ENCODE measurements at regions of chr5 and their contacts with region 1.

Region 1: DNA sequence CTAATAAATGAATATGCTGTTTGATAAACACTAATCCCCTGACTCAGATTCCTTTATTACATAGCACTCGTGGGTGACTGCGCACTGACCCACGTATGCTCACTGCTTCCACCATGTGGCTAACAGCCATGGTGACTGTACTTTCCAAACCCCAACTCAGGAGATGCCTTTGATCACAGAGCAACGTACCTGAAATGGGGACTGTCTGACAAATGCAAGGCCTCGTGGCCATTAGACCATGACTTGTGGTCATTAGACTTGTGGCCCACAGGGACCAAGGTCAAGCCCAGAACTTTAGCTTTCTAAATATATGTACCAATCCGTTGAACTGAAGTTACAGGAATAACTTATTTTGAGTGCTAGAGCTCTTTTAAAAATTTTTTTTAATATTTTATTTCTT is 46.6 kb downstream of the CYFIP2 start:
- DNase-seq: peak in 8 of 9 donors; percentile 51 to 71 (median 65)
- ATAC-seq: peak; percentile 96
- H3K4me3 ChIP-seq: no peak overlapping the region
- H3K4me3 Mint-ChIP-seq: peak overlapping the region in 2 of 10 donors; percentile 35
- H3K27ac ChIP-seq: peak overlapping the region; percentile 39
- H3K27ac Mint-ChIP-seq: peak overlapping the region; percentile 50 to 94 (median 86)
- H3K4me1 ChIP-seq: peaks cover 22 to 36% of the 10 kb centered on the region in 2 donors
- H3K4me1 Mint-ChIP-seq: peaks cover 18 to 59% (median 42%) of the 10 kb centered on the region in 7 donors
- H3K27me3 ChIP-seq: no peaks in the 10 kb centered on the region
- H3K27me3 Mint-ChIP-seq: no peaks in the 10 kb centered on the region

Region 2: GRCh38 chr5:156893517-156893916 is 419.0 kb before region 1 on chr5:
- CTCF ChIA-PET with region 1: no interaction called
- POLR2A ChIA-PET with region 1: no interaction called
- intact Hi-C with region 1: loop called in 1 of 2 experiments (anchors 5 kb)
- DNase-seq: no peak
- ATAC-seq: no peak
- H3K4me3 ChIP-seq: no peak overlapping the region
- H3K4me3 Mint-ChIP-seq: peak overlapping the region in 5 of 10 donors; percentile 12 to 58 (median 19)
- H3K27ac ChIP-seq: no peak overlapping the region
- H3K27ac Mint-ChIP-seq: peak overlapping the region in 6 of 9 donors; percentile 2 to 93 (median 58)
- H3K4me1 ChIP-seq: peaks cover 0 to 15% of the 10 kb centered on the region in 2 donors
- H3K4me1 Mint-ChIP-seq: peaks cover 21 to 52% (median 32%) of the 10 kb centered on the region in 7 donors
- H3K27me3 ChIP-seq: no peaks in the 10 kb centered on the region
- H3K27me3 Mint-ChIP-seq: no peaks in the 10 kb centered on the region

Region 3: GRCh38 chr5:156913719-156914370 is 398.6 kb before region 1 on chr5:
- CTCF ChIA-PET with region 1: no interaction called
- POLR2A ChIA-PET with region 1: no interaction called
- intact Hi-C with region 1: loop called in 1 of 2 experiments (anchors 10 kb)
- DNase-seq: peak in 6 of 9 donors; percentile 32 to 60 (median 54)
- ATAC-seq: peak; percentile 85
- H3K4me3 ChIP-seq: peak overlapping the region; percentile 24
- H3K4me3 Mint-ChIP-seq: peak overlapping the region; percentile 71 to 93 (median 82)
- H3K27ac ChIP-seq: peak overlapping the region; percentile 65
- H3K27ac Mint-ChIP-seq: peak overlapping the region; percentile 91 to 100 (median 97)
- H3K4me1 ChIP-seq: peaks cover 24 to 28% of the 10 kb centered on the region in 2 donors
- H3K4me1 Mint-ChIP-seq: peaks cover 35 to 81% (median 68%) of the 10 kb centered on the region in 7 donors
- H3K27me3 ChIP-seq: no peaks in the 10 kb centered on the region
- H3K27me3 Mint-ChIP-seq: no peaks in the 10 kb centered on the region

Region 4: GRCh38 chr5:157225469-157226422 is 86.7 kb before region 1 on chr5:
- CTCF ChIA-PET with region 1: interaction called, 4 read pairs
- POLR2A ChIA-PET with region 1: no interaction called
- intact Hi-C with region 1: loop called in 1 of 2 experiments (anchors 5 kb)
- DNase-seq: no peak
- ATAC-seq: no peak
- H3K4me3 ChIP-seq: no peak overlapping the region
- H3K4me3 Mint-ChIP-seq: peak overlapping the region in 6 of 10 donors; percentile 12 to 81 (median 50)
- H3K27ac ChIP-seq: peak overlapping the region; percentile 37
- H3K27ac Mint-ChIP-seq: peak overlapping the region; percentile 71 to 96 (median 82)
- H3K4me1 ChIP-seq: peaks cover 44 to 60% of the 10 kb centered on the region in 2 donors
- H3K4me1 Mint-ChIP-seq: peaks cover 34 to 75% (median 59%) of the 10 kb centered on the region in 7 donors
- H3K27me3 ChIP-seq: no peaks in the 10 kb centered on the region
- H3K27me3 Mint-ChIP-seq: no peaks in the 10 kb centered on the region

Region 5: DNA sequence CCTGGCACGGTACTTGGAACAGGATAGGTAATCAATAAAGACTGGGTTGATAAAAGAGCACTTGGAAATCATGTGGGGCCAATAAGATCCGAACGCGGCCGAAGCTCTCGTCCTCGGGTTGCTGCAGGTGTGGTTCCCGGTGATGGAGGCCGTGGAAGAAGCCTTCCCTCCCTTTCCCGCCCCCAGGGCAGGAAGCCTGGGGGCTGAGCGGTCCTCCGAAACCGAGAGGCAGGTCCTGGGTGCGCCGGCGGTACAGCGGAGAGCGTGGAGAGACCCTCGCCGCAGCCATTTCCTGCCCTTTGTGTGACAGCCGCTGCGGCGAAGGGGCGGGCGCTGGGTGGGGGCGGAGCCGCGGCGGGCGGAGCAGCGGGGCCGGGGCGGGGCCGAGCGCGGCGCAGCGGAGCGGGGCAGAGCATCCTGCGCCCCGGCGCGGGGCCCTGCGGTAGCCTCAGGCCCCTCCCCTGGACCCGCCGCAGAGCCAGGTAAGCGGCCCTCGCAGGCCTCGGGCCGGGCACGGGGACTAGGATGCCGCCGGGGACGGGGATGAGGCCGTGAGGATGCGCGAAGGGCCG is 46.7 kb before region 1 on chr5 and contains the start of gene CYFIP2:
- CTCF ChIA-PET with region 1: interaction called, 3 read pairs
- POLR2A ChIA-PET with region 1: interaction called, 59 read pairs
- intact Hi-C with region 1: no loop called
- DNase-seq: peak; percentile 68 to 85 (median 84)
- ATAC-seq: peak; percentile 94
- H3K4me3 ChIP-seq: peak within 1 kb of the TSS; percentile 83
- H3K4me3 Mint-ChIP-seq: peak within 1 kb of the TSS; percentile 95 to 99 (median 97)
- H3K27ac ChIP-seq: peak within 1 kb of the TSS; percentile 84
- H3K27ac Mint-ChIP-seq: peak within 1 kb of the TSS; percentile 95 to 99 (median 98)
- H3K4me1 ChIP-seq: peaks cover 41 to 57% of the 10 kb centered on the region in 2 donors
- H3K4me1 Mint-ChIP-seq: peaks cover 51 to 76% (median 72%) of the 10 kb centered on the region in 7 donors
- H3K27me3 ChIP-seq: no peaks in the 10 kb centered on the region
- H3K27me3 Mint-ChIP-seq: no peaks in the 10 kb centered on the region
- total RNA-seq, gene CYFIP2: 386 to 449 (median 401) TPM

Region 6: DNA sequence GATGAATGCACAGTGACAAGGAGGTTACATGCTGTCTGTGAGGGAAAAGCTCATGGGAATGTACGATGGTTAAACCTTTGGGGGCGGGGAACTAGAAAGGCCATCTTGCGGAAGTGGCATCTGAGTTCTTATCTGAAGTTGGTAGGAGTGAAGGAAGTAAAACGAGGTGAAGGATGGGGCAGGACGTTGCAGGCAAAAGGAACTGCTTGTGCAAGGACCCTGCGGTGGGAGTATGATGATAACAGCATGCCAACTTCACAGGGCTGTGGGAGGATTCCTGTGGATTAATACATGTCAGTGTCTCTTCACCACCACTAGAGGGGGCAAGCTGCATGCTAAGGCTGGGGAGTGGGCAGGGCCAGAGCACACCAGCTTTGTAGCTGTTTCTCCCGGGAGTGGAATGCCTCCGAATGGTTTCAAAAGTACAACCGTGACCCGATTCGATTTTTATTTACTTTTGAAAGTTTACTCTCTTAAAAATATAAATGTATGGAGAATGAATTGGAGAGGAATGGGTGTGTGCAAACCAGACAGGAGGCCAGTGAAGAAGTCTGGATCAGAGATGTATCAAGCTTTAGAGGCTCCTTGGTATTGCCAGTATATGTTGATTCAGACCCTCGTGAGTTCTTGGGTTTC is 15.9 kb after region 1 on chr5:
- CTCF ChIA-PET with region 1: interaction called, 13 read pairs
- POLR2A ChIA-PET with region 1: interaction called, 4 read pairs
- intact Hi-C with region 1: loop called in 1 of 2 experiments (anchors 1 kb)
- DNase-seq: peak in 8 of 9 donors; percentile 42 to 67 (median 60)
- ATAC-seq: peak; percentile 93
- H3K4me3 ChIP-seq: no peak overlapping the region
- H3K4me3 Mint-ChIP-seq: peak overlapping the region; percentile 29 to 80 (median 68)
- H3K27ac ChIP-seq: peak overlapping the region; percentile 63
- H3K27ac Mint-ChIP-seq: peak overlapping the region; percentile 71 to 95 (median 91)
- H3K4me1 ChIP-seq: peaks cover 10 to 24% of the 10 kb centered on the region in 2 donors
- H3K4me1 Mint-ChIP-seq: peaks cover 28 to 50% (median 45%) of the 10 kb centered on the region in 7 donors
- H3K27me3 ChIP-seq: no peaks in the 10 kb centered on the region
- H3K27me3 Mint-ChIP-seq: no peaks in the 10 kb centered on the region